ENCODE measurements at regions of chr19 and their contacts with region 1.

Region 1: DNA sequence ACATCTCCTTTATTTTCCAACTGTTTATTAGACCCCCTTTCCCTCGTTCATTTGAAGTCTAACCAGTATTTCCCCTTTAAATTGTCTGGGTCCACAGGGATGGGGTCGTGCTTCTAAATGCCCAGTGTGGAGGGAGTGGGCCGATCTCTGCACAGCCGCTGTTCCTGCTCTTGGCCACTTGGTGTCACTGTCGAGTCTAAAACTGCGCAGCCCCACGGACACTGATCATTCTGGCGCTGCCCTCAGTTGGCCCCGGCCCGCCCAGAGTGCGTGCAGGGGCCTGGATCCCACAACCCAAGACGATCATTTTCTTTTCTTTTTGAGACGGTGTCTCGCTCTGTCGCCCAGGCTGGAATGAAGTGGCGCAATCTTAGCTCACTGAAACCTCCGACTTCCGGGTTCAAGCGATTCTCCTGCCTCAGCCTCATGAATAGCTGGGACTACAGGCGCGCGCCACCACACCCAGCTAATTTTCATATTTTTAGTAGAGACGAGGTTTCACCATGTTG is 12.0 kb downstream of the WDR88 start:
- DNase-seq: peak; percentile 69
- H3K4me3 Mint-ChIP-seq: no peak overlapping the region
- H3K27ac Mint-ChIP-seq: no peak overlapping the region
- H3K4me1 Mint-ChIP-seq: peaks cover 4% of the 10 kb centered on the region
- H3K27me3 Mint-ChIP-seq: peaks cover 21% of the 10 kb centered on the region

Region 2: DNA sequence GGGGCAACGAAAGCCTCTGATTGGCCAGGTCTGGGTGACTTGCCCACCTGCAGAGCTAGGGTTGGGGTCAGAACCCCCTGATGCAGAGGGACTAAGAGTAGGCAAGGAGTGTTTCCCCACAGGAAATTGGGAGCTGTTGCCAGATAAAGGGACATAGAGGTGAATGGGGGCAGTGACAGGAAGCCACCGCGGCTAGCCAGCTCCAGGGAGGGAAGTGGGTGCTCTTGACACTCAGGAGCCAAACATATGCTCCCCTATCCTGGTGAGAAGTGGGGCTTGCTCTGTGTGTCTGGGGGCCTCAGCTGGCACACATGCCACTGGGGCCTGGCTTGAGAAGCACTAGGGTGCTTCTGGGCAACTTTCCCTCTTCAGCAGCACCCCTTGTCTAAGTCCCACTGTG is 14.0 kb after region 1 on chr19:
- CTCF ChIA-PET with region 1: interaction called, 22 read pairs
- DNase-seq: no peak
- H3K4me3 Mint-ChIP-seq: no peak overlapping the region
- H3K27ac Mint-ChIP-seq: peak overlapping the region; percentile 72
- H3K4me1 Mint-ChIP-seq: peaks cover 43% of the 10 kb centered on the region
- H3K27me3 Mint-ChIP-seq: no peaks in the 10 kb centered on the region

Region 3: DNA sequence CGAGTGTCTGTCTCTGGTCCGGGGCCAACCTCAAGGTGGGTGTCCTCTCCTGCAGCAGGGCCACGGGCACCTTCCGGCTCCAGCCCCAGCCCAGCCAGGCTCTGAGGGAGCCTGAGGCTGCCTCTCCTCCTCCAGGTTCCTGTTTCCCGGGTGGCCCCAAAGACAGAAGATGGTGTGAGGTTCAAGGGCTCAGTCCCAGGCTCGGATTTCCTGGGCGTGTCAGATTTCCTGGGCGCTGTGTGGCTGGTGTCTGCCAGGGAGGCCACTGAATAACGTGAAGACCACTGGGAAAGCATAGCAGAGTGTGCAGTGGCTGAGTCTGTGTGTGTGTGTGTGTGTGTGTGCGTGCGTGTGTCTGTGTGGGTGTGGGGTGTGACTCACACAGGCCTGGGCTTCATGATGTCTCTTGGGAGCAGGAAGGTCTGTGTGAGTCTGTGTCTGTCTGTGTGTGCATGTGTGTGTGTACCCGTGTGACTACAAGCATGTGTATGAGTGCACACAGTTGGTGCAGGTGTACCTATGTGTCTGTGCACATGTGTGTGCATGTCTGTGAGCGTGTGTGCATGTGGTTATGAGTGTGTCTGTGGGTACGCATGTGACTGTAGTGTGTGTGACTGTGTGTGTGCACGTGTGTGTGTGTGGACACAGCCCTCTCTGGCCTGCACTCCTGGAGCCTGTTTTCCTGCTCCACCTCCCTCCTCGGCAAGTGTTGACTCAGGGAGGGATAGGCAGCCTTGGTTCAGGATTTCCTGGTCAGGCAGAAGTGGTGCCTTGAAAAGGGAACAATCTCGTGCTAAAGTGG is 130.1 kb after region 1 on chr19:
- CTCF ChIA-PET with region 1: no interaction called
- DNase-seq: peak; percentile 29
- H3K4me3 Mint-ChIP-seq: no peak overlapping the region
- H3K27ac Mint-ChIP-seq: no peak overlapping the region
- H3K4me1 Mint-ChIP-seq: peaks cover 5% of the 10 kb centered on the region
- H3K27me3 Mint-ChIP-seq: peaks cover 7% of the 10 kb centered on the region